HEK293T (cell line): ENCODE measurements at regions of chrX and their contacts with region 1.

Region 1: DNA sequence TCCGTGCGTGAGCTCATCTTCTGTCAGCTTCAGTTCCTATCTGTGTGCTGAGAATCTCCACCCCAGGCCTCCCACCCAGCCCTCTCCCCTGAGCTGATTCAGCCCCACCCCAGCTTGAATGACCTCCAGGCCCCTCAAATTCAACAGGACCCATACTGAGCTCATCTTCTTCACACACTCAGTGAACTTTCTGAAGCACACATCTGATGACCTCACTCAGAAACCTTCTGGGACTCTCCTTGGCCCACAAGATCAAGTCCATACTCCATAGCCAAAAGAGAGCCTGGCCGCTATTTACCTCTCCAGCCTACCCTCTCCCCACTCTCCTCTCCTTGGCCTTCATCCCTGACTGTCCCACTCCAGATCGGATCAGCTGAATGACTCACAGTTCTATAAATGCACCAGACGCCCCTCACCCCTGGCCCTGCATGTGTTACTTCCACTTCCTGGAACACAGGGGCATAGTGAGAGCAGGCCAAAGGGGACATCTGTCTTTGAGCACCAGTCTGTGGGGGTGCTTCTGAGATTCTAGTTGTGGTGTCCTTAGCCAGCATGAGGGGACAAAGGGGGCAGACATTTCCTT is 62.5 kb downstream of the PJA1 start:
- DNase-seq: no peak

Region 2: GRCh38 chrX:69088171-69088938 is 14.3 kb before region 1 on chrX:
- CTCF ChIA-PET with region 1: interaction called, 4 read pairs
- POLR2A ChIA-PET with region 1: interaction called, 56 read pairs
- DNase-seq: no peak

Region 3: DNA sequence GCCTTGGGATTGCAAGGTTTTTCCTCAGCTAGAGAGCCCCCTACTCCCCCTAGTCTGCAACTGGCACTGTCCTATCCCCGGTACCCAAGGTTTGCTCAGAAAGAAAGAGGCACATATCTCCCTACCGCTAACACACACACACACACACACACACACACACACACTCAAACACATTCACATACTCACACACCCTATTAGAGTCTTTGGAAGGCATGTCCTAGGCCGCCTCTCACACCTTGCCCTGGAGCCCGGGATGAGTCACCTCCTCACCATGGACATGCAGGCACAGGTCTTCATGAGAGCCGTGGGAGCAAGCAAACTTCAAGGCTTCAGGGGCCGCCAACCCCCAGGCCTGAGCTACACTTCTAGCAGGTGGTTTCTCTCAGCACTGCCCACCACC is 13.4 kb after region 1 on chrX:
- CTCF ChIA-PET with region 1: interaction called, 3 read pairs
- POLR2A ChIA-PET with region 1: interaction called, 21 read pairs
- DNase-seq: no peak